Natural killer cell (primary cell): ENCODE measurements at regions of chr18 and their contacts with region 1.

Region 1: DNA sequence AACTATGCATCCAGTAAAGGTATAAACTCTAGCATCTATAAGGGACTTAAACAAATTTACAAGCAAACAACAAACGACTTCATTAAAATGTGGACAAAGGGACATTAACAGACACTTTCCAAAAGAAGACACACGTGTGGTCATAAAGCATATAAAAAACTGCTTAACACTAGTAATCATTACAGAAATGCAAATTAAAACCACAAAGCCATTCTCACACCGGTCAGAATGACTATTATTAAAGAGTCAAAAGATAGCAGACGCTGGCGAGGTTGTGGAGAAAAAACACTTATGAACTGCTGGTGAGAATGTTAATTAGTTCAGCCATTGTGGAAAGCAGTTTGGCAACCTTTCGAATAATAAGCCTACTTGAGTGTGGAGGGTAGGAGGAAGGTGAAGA is 217.0 kb upstream of the DLGAP1 start:
- DNase-seq: no peak
- ATAC-seq: no peak
- H3K4me3 ChIP-seq: no peak overlapping the region
- H3K4me3 Mint-ChIP-seq: no peak overlapping the region
- H3K27ac ChIP-seq: no peak overlapping the region
- H3K27ac Mint-ChIP-seq: no peak overlapping the region
- H3K4me1 ChIP-seq: no peaks in the 10 kb centered on the region
- H3K4me1 Mint-ChIP-seq: no peaks in the 10 kb centered on the region
- H3K27me3 ChIP-seq: no peaks in the 10 kb centered on the region
- H3K27me3 Mint-ChIP-seq: no peaks in the 10 kb centered on the region
- CTCF ChIP-seq: no peak

Region 2: GRCh38 chr18:4641771-4642368 is 30.3 kb before region 1 on chr18:
- intact Hi-C with region 1: no loop called
- DNase-seq: no peak
- ATAC-seq: no peak
- H3K4me3 ChIP-seq: no peak overlapping the region
- H3K4me3 Mint-ChIP-seq: no peak overlapping the region
- H3K27ac ChIP-seq: no peak overlapping the region
- H3K27ac Mint-ChIP-seq: no peak overlapping the region
- H3K4me1 ChIP-seq: no peaks in the 10 kb centered on the region
- H3K4me1 Mint-ChIP-seq: no peaks in the 10 kb centered on the region
- H3K27me3 ChIP-seq: no peaks in the 10 kb centered on the region
- H3K27me3 Mint-ChIP-seq: no peaks in the 10 kb centered on the region
- CTCF ChIP-seq: no peak

Region 3: DNA sequence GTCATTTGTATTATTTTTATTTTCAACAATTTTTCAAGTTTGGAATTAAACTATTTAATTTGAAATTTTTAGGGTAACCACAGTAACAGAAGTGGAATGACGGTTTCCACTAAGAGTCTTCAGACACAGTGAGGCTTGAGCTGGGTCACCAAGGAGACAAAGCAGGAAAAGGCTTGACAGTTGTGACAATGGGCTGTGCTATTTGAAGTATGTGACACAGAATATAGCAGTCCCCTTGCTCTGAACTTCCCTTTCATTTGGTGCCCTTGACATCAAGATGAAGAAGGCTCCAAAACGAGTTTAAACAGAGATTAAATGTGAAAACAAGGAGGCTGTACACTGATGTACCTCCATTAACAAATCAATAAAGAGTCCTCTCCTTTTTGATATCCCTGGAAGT is 48.4 kb after region 1 on chr18:
- intact Hi-C with region 1: loop called (anchors 10 kb)
- DNase-seq: no peak
- ATAC-seq: no peak
- H3K4me3 ChIP-seq: no peak overlapping the region
- H3K4me3 Mint-ChIP-seq: no peak overlapping the region
- H3K27ac ChIP-seq: no peak overlapping the region
- H3K27ac Mint-ChIP-seq: no peak overlapping the region
- H3K4me1 ChIP-seq: no peaks in the 10 kb centered on the region
- H3K4me1 Mint-ChIP-seq: no peaks in the 10 kb centered on the region
- H3K27me3 ChIP-seq: no peaks in the 10 kb centered on the region
- H3K27me3 Mint-ChIP-seq: no peaks in the 10 kb centered on the region
- CTCF ChIP-seq: no peak